ENCODE measurements at regions of chr17 and their contacts with region 1.

Region 1: DNA sequence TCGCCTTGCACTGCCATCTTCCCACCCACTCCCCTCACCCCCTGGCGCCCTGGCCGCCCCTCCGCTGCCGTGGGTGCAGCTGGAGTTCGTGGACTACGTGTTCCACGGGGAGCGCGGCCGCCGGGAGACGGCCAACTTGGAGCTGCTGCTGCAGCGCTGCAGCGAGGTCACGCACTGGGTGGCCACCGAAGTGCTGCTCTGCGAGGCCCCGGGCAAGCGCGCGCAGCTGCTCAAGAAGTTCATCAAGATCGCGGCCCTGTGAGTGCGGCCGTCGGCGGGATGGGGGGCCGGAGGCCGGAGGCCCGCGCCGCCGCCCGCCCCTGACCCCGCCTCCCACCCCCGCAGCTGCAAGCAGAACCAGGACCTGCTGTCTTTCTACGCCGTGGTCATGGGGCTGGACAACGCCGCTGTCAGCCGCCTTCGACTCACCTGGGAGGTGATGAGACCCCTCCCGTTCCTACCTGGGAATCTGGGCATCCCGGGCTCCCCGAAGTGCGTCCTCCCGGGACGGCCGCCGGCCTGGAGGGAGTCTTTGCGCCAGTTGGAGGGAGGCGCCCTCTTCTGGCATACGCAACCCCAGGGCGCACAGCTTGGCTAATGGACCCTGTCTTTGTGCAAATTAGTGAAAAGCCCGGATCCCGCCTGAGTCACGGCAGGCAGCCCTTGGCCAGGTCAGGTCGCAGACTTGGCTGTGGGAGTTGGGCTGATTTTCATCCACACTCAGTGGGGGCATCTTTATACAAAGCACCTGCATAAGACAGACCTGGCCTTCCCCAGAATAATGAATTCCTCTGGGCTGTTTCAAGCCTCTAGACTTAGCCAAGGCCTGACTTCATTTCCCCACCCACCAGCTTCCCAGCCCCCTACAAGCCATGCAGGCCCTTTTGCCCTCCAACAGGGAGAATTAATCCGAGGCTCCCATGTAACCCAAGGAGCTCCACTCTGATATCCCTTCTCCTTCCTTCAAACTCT is 14.3 kb downstream of the RAPGEFL1 start:
- DNase-seq: no peak
- H3K4me3 ChIP-seq: no peak overlapping the region
- H3K27ac ChIP-seq: no peak overlapping the region
- H3K4me1 ChIP-seq: no peaks in the 10 kb centered on the region
- H3K27me3 ChIP-seq: no peaks in the 10 kb centered on the region
- CTCF ChIP-seq: no peak

Region 2: DNA sequence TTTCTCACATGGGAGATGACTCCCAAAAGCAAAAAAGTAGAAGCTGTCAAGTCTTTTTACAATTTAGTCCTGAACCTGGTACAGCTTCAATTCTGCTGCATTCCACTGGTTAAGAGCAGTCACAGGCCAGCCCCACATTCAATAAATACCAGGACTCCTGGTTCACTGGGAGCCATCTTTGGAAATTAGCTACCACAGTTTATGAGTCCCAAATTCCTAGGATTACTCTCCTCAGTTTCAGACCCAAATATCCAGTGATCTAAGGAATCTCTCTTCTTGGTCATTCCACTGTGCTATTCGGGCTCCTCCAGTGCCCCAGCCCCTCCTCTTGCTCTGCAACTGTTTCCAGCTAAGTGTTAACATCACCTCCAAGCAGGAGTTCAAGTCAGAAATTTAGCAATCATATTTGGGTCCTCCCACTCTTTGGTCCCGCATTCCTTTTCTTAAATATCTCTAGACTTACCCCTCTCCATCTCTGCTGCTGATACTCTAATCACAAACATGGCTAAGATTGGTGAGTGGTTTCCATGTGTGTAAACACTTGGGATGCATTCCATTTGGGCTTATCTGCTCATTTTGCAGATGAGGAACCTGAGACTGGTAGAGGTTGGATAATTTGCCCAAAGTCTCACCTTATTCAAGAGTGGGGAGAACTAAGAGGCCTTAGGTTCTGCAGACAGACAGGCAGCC is 18.0 kb after region 1 on chr17:
- CTCF ChIA-PET with region 1: no interaction called
- POLR2A ChIA-PET with region 1: interaction called, 22 read pairs
- intact Hi-C with region 1: no loop called
- DNase-seq: no peak
- H3K4me3 ChIP-seq: no peak overlapping the region
- H3K27ac ChIP-seq: no peak overlapping the region
- H3K4me1 ChIP-seq: no peaks in the 10 kb centered on the region
- H3K27me3 ChIP-seq: no peaks in the 10 kb centered on the region
- CTCF ChIP-seq: no peak

Region 3: DNA sequence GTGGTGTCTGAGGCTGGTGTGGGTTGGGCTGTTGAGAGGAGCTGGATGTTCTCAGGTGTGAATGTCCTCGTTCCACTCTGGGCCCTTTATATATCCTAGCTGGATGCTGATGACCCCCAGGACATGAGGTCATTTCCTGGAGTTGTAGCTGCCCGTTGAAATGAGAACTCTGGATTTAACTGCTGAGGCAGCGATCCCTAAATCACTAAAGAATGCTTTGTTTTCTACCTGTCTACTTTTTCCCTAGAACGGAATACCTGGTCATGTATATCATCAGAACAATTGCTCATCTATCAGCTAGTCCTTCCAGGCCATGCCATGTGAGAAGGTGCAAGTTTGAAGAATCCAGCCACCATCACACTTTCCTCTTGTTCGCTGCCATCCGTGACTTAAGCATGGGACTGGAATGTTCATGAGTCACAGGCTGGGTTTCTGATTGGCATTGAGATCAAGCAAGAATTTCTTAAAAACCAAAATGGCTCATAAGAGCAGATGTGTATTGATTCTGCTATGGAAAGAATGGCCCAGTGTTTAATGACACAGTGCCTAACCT is 868.6 kb after region 1 on chr17 and contains the start of gene KRTAP2-3:
- CTCF ChIA-PET with region 1: no interaction called
- POLR2A ChIA-PET with region 1: no interaction called
- intact Hi-C with region 1: no loop called
- DNase-seq: peak; percentile 64 to 93
- H3K4me3 ChIP-seq: no peak within 1 kb of the TSS
- H3K27ac ChIP-seq: peak within 1 kb of the TSS; percentile 88
- H3K4me1 ChIP-seq: peaks cover 47% of the 10 kb centered on the region
- H3K27me3 ChIP-seq: no peaks in the 10 kb centered on the region
- CTCF ChIP-seq: no peak
- total RNA-seq, gene KRTAP2-3: 0.57 TPM in 1 of 2 replicates, not detected in the other

Region 4: DNA sequence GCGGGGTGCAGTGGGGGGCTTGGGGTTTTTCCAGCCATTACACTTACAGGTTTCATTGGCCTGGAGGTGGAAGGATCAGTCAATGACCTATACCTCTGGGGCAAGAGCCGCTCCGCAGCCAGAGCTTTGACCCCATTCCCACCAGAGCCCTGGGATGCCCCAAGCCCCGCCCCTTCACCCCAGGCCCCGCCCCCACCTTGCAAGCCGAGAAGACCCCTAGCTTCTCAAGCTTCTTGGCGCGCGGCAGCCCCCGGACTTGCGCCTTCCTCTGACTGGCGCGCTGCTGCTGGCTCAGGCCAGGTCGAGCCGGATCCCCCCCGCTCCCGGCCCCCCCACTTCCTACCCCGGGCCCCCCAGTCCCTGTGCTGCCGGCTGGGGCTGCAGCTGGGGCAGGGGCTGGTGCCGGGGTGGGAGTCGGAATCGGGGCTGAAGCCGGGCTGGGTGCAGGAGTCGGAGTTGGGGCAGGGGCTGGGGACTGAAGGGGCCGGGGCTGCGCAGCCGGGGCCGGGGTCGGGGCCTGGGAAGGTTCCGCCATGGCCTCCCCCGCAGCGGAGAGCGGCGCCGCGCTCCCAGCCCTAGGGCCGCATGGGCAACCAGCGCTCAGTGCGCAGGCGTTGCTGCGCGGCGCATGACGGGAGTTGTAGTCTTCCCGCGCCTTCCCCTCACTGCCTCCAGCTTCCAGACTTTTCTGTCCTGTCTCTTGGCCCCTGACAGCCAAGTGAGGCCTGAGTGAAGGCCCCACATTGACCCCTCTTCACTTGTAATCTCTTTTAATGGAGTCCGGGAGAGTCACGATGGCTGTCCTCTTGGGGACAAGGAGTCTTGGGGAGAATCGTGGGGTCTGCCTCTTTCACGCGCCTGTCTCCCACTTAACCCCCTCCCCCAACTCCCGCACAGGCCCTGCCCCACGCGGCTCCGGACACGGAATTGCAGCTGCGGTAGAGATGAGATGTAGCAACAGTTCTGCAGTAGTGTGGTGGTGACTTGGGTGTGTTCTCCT is 1929.5 kb after region 1 on chr17 and contains the start of gene KAT2A:
- CTCF ChIA-PET with region 1: interaction called, 11 read pairs
- POLR2A ChIA-PET with region 1: no interaction called
- intact Hi-C with region 1: no loop called
- DNase-seq: peak; percentile 66 to 67
- H3K4me3 ChIP-seq: peak within 1 kb of the TSS; percentile 62; the same call in 1 of the 2 replicates
- H3K27ac ChIP-seq: no peak within 1 kb of the TSS
- H3K4me1 ChIP-seq: no peaks in the 10 kb centered on the region; the same call in 1 of the 2 replicates
- H3K27me3 ChIP-seq: no peaks in the 10 kb centered on the region
- CTCF ChIP-seq: no peak
- total RNA-seq, gene KAT2A: 42.1 and 47.6 TPM in 2 replicates